ENCODE measurements at regions of chr3 and their contacts with region 1.

Region 1: GRCh38 chr3:157618075-157618760 is 115.0 kb upstream of the VEPH1 start:
- DNase-seq: no peak
- H3K4me3 ChIP-seq: no peak overlapping the region
- H3K27ac ChIP-seq: no peak overlapping the region
- H3K4me1 ChIP-seq: no peaks in the 10 kb centered on the region
- H3K27me3 ChIP-seq: no peaks in the 10 kb centered on the region
- CTCF ChIP-seq: peak; percentile 36 to 57 (median 54)
- EP300 ChIP-seq: no peak
- POLR2A ChIP-seq: no peak

Region 2: GRCh38 chr3:157487339-157487738 is 130.9 kb before region 1 on chr3:
- intact Hi-C with region 1: no loop called
- DNase-seq: no peak
- H3K4me3 ChIP-seq: no peak overlapping the region
- H3K27ac ChIP-seq: no peak overlapping the region
- H3K4me1 ChIP-seq: no peaks in the 10 kb centered on the region
- H3K27me3 ChIP-seq: no peaks in the 10 kb centered on the region
- CTCF ChIP-seq: no peak
- EP300 ChIP-seq: no peak
- POLR2A ChIP-seq: no peak

Region 3: DNA sequence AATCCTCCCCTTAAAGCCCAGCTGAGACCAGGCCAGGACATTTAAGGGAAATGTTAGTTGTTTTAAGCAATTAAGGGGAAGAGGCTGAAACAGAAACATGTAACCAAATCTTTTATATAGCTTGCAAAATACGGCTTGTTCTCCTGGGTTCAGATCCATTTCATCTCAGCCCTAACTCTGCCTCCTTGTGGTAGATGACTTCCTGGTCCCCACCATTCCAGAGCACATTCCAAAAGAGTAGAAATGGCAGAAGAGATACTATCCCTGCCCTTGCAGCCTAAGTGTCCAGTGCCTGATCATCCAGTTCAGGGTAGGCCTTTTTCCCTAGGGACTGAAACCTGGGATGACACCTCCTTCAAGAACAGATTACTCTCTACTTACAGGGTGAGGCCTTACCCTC is 151.2 kb after region 1 on chr3:
- intact Hi-C with region 1: no loop called
- DNase-seq: no peak
- H3K4me3 ChIP-seq: no peak overlapping the region
- H3K27ac ChIP-seq: no peak overlapping the region
- H3K4me1 ChIP-seq: no peaks in the 10 kb centered on the region
- H3K27me3 ChIP-seq: no peaks in the 10 kb centered on the region
- CTCF ChIP-seq: no peak
- EP300 ChIP-seq: no peak
- POLR2A ChIP-seq: no peak

Region 4: DNA sequence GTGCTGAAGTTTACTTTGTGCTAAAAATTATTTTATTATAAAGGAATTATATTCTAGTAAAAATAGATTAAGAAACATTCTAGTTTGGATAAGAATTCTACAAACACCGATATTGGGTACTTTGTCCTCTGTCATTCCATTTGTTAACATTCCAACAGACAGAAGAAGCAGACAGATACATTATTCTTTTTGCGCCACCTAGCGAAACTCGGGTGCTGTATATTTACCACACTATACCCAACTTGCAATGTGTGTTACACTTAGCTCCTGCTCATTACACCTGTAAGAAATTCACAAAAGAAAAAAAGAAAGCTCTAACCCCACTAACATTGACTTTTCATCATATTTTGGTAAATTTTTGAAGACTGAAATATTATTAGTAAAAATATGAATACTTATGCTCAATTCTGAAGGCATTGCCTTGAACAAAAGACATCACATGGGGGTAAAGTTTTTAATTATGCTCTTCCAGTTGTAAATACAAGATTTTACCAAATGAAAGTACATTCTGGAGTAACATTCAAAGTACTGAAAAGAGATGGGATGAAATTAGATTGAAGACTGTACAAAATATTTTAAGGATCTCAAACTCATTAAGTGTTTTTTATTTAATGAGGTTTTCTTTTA is 816.3 kb after region 1 on chr3:
- intact Hi-C with region 1: loop called (anchors 1 kb)
- DNase-seq: peak; percentile 62
- H3K4me3 ChIP-seq: no peak overlapping the region
- H3K27ac ChIP-seq: no peak overlapping the region
- H3K4me1 ChIP-seq: no peaks in the 10 kb centered on the region
- H3K27me3 ChIP-seq: no peaks in the 10 kb centered on the region
- CTCF ChIP-seq: peak in 3 of 4 experiments; percentile 42 to 58 (median 54)
- EP300 ChIP-seq: no peak
- POLR2A ChIP-seq: no peak

Region 5: DNA sequence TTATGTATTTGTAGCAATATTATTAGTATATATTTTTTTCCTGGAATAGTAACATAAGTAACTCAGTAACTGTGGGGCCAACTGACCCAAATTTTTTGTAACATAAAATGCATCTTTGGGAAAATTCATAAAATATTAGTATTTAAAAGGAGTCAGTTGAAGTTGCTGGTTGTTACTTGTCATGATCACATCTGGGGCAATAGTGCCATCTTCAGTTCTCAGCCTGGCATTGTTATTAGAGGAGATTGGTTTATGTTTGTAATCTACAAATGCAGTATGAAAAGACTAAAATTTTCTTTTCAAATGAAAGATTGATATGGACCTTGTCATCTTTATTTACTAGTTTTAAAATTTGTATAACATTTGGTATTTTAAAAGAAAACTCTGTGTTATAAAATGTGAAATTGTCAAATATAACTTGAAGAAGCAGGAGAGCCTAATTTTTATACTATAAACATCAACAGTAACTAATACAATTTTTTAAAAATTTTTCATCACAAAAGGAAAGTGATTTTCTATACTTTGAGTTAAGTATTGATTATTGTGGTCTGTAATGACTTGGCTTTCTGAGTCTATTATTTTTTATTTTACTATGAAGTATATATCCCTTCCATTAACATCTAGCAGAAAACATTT is 914.0 kb after region 1 on chr3:
- intact Hi-C with region 1: loop called (anchors 5 kb)
- DNase-seq: no peak
- H3K4me3 ChIP-seq: no peak overlapping the region
- H3K27ac ChIP-seq: no peak overlapping the region
- H3K4me1 ChIP-seq: no peaks in the 10 kb centered on the region
- H3K27me3 ChIP-seq: no peaks in the 10 kb centered on the region
- CTCF ChIP-seq: peak in 2 of 4 experiments; percentile 13 to 25
- EP300 ChIP-seq: no peak
- POLR2A ChIP-seq: no peak

Measured in sigmoid colon (tissue), 7 donors.